ENCODE measurements at regions of chr17 and their contacts with region 1.

Region 1: DNA sequence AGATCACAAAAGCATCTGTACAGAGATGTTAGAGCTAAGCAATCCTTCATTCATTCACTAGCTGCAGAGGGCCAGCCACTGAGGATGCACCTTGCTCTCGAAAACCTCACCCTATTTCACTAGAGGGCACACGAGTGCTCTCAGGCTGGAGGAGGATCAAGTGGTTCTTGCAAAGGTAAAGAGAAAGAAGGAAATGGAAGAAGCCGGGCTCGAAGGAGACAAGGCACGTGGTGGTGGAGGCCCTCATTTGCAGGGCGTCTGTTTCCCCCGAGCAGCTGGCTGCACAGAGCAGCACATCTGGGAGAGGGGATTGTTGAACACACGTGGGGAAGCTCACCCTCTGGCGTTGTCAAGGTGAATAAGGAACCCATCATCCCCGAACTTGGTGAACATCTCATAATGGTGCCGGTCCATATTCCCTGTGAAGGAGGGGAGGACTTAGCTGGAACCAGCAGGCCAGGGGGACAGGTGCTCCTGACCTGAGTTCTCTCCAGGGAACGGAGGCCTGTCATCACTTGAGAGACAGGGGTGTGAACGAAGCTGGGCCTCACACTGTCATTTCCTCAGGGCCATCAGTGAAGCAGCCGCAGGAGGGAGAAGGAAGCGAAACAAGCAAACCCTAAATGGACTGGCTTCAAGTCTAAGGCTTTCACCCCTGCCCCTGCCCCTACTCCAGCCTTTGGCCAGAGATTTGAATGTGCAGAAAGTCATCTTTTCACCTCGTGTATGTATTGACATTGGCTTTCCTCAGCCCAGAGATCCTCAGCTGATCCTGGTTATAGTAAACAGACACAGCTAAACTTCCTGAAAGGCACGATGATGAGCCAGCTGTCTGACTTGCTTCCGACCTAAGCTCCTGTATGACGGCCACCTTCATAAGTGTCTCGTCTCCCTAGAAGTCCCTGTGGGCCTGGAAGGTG is 27.6 kb downstream of the PRKAR1A start:
- DNase-seq: no peak
- ATAC-seq: no peak
- H3K4me3 ChIP-seq: no peak overlapping the region
- H3K27ac ChIP-seq: peak overlapping the region in 1 of 4 donors; percentile 31
- H3K4me1 ChIP-seq: peaks cover 18 to 23% of the 10 kb centered on the region in 2 donors
- H3K27me3 ChIP-seq: no peaks in the 10 kb centered on the region
- CTCF ChIP-seq: no peak
- POLR2A ChIP-seq: no peak

Region 2: GRCh38 chr17:68613739-68614298 is 74.0 kb after region 1 on chr17:
- in situ Hi-C with region 1: loop called in 1 of 4 experiments (anchors 10 kb)
- intact Hi-C with region 1: loop called (anchors 5 kb)
- DNase-seq: no peak
- ATAC-seq: no peak
- H3K4me3 ChIP-seq: no peak overlapping the region
- H3K27ac ChIP-seq: no peak overlapping the region
- H3K4me1 ChIP-seq: no peaks in the 10 kb centered on the region
- H3K27me3 ChIP-seq: no peaks in the 10 kb centered on the region
- CTCF ChIP-seq: peak in 2 of 5 experiments; percentile 44 to 51
- POLR2A ChIP-seq: no peak

Region 3: GRCh38 chr17:68627483-68627882 is 87.7 kb after region 1 on chr17:
- in situ Hi-C with region 1: no loop called
- intact Hi-C with region 1: no loop called
- DNase-seq: no peak
- ATAC-seq: no peak
- H3K4me3 ChIP-seq: no peak overlapping the region
- H3K27ac ChIP-seq: no peak overlapping the region
- H3K4me1 ChIP-seq: no peaks in the 10 kb centered on the region
- H3K27me3 ChIP-seq: no peaks in the 10 kb centered on the region
- CTCF ChIP-seq: no peak
- POLR2A ChIP-seq: no peak

Region 4: DNA sequence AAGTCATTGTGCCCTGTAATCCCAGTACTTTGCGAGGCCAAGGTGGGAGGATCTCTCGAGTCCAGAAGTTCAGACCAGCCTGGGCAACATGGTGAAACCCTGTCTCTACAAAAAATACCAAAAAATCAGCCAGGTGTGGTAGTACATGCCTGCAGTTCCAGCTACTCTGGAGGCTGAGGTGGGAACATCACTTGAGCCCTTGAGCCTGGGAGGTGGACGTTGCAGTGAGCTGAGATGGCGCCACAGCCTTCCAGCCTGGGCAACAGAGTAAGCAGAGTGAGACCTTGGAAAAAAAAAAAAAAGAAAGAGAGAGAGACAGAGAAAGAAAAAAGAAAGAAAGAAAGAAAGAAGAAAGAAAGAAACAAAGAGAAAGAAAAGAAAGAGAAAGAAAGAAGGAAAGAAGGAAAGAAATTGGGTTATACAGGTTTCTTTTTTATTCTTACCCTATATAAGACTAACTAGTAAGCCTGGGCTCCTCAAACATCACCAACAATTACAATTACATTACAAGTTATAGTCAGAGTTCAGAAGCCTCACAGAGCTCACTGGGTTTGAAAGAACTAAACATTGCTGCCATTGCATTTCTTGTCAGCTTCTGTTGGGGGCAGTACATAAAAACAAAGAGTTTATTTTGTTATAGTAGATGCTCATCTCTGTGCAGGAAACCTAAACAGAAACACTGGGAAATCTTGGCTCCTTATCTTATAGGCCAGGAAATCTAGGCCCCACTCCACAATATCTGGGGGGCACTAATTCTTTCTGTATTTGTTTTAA is 527.7 kb after region 1 on chr17:
- in situ Hi-C with region 1: no loop called
- intact Hi-C with region 1: no loop called
- DNase-seq: no peak
- ATAC-seq: no peak
- H3K4me3 ChIP-seq: no peak overlapping the region
- H3K27ac ChIP-seq: no peak overlapping the region
- H3K4me1 ChIP-seq: no peaks in the 10 kb centered on the region
- H3K27me3 ChIP-seq: no peaks in the 10 kb centered on the region
- CTCF ChIP-seq: no peak
- POLR2A ChIP-seq: no peak

Region 5: DNA sequence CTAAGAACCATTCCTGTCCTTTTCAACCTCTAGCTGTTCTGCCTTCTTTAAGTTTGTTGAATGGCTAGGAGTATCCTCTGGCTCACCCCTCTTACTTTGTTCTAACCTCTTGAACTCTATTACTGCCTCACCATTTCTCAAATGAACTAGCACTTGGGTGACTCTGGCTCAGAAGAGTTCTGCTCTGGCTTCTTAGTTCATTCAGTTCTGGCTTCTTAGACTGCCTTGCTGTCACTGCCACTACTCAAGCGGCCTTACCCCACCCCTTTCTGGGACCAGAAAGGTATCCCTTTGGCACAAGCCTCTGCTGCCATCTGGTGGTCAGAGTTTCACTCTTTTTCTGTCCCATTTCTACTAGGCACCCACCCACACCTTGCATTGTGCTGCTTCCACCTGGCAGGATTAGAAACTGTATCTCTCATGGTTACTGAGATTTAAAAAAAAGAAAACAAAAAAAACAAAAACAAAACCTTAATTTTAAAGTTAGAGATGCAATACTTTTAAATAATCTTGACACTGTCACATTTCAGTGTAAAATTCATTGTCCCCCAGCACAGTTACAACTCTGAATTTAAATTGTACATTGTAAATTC is 695.6 kb after region 1 on chr17:
- in situ Hi-C with region 1: loop called in 2 of 4 experiments (anchors 25 kb)
- intact Hi-C with region 1: no loop called
- DNase-seq: peak; percentile 43 to 58
- ATAC-seq: peak in 1 of 2 donors; percentile 68
- H3K4me3 ChIP-seq: no peak overlapping the region
- H3K27ac ChIP-seq: no peak overlapping the region
- H3K4me1 ChIP-seq: no peaks in the 10 kb centered on the region
- H3K27me3 ChIP-seq: no peaks in the 10 kb centered on the region
- CTCF ChIP-seq: peak; percentile 20 to 62 (median 55)
- POLR2A ChIP-seq: no peak